ENCODE measurements at regions of chr3 and their contacts with region 1.

Region 1: DNA sequence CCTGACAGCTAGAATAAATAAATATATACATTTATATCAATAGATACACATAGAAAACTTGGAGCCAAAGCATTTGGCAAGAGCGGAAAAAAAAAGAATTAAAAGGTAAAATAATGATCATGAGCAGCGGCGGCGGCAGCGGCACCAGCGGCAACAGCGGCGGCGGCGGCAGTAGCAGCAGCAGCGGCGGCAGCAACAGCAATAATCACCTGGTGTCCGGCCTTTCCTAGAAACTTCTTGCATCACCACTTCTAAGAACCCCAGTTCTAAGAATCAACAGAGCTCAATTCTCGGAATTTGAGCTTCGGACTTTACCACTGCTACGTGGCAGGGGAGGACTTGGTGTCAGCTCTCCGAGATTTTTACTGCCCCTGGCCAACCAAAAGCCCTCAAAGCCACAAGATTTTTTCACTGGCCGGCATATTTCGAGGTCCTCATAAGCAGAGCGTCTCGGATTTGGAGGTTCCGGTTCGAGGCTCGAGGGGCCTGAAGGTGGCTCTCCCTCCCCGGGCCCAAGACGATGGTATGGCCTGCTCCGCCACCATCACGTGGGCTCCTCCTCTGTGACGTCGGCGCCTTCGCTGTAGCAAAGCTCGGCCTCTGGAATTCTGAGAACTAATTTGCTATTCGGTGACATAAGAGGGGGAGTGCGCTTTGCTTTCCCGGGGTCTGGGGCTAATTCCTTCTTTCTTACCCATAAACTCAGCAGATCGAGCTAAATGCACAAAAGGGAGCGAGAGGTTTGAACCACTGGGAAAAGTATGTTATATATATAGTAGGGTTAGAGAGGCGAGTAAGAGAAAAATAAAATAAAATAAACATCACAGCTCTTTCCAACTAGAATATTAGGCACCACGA is at the start of gene BCL6:
- DNase-seq: peak; percentile 94 to 96 (median 94)
- ATAC-seq: peak; percentile 68 to 84 (median 72)
- H3K4me3 ChIP-seq: peak within 1 kb of the TSS; percentile 54 to 89 (median 78)
- H3K27ac ChIP-seq: peak within 1 kb of the TSS; percentile 94 to 100 (median 98)
- H3K4me1 ChIP-seq: peaks cover 0 to 49% (median 14%) of the 10 kb centered on the region in 12 donors
- H3K27me3 ChIP-seq: no peaks in the 10 kb centered on the region
- CTCF ChIP-seq: peak in 2 of 12 donors; percentile 10 to 13
- POLR2A ChIP-seq: peak; percentile 84 to 92
- total RNA-seq, gene BCL6: 29.7 to 109 (median 62.0) TPM

Region 2: GRCh38 chr3:187986514-187986934 is 241.1 kb after region 1 on chr3:
- intact Hi-C with region 1: loop called in 3 of 10 experiments (anchors 2 to 5 kb)
- DNase-seq: no peak
- ATAC-seq: peak in 2 of 4 donors; percentile 10 to 37
- H3K4me3 ChIP-seq: no peak overlapping the region
- H3K27ac ChIP-seq: peak overlapping the region in 4 of 12 donors; percentile 11 to 63 (median 45)
- H3K4me1 ChIP-seq: peaks cover 0 to 27% (median 9%) of the 10 kb centered on the region in 12 donors
- H3K27me3 ChIP-seq: no peaks in the 10 kb centered on the region
- CTCF ChIP-seq: no peak
- POLR2A ChIP-seq: no peak

Region 3: DNA sequence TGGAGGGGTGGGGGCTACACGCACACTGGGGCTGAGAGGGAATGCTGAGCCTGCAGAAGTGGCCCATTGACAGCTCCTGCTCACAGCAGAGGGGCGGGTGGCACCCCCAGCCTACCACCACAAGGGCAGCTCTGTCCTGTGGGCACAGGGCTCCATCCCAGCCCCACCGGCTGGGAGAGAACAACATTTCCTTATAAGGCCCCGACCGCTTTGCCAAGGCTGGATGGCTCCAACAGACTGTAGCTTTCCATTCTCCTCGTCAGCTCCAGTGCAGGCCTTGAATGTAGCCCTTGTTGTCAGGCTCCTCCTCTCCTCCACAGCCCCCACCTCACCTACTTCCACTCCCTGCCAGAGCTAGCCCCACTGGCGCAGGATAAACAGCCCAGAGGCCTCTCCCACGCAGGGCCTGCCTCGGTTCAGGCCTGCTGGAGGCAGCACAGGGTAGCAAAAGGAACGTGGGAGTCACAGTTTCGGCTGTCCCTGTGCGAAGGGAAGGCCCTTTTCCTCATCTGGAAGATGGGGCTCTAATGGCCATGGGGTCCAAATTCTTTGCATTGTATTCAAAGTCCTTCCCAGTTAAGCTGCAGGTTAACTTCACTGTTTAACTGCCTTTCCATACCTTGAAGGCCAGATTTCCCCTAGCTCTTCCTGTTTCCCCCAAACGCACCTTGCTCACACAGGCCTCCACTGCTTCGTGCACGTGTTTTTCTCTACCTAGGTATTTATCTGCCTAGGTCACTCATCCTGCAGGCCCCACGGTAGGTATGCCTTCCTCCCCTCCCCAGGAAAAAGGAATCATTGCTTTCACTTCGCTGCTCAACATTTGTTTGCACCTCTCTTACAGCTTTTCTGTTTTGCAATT is 307.0 kb after region 1 on chr3:
- intact Hi-C with region 1: loop called in 7 of 10 experiments (anchors 1 to 10 kb)
- DNase-seq: peak; percentile 84 to 92 (median 89)
- ATAC-seq: peak; percentile 97 to 98 (median 98)
- H3K4me3 ChIP-seq: peak overlapping the region in 6 of 12 donors; percentile 12 to 37 (median 24)
- H3K27ac ChIP-seq: peak overlapping the region; percentile 49 to 92 (median 79)
- H3K4me1 ChIP-seq: peaks cover 0 to 29% (median 15%) of the 10 kb centered on the region in 12 donors
- H3K27me3 ChIP-seq: peaks cover 0 to 3% (median 0%) of the 10 kb centered on the region in 9 donors
- CTCF ChIP-seq: peak in 11 of 12 donors; percentile 19 to 82 (median 59)
- POLR2A ChIP-seq: peak in 1 of 2 donors; percentile 24

Region 4: DNA sequence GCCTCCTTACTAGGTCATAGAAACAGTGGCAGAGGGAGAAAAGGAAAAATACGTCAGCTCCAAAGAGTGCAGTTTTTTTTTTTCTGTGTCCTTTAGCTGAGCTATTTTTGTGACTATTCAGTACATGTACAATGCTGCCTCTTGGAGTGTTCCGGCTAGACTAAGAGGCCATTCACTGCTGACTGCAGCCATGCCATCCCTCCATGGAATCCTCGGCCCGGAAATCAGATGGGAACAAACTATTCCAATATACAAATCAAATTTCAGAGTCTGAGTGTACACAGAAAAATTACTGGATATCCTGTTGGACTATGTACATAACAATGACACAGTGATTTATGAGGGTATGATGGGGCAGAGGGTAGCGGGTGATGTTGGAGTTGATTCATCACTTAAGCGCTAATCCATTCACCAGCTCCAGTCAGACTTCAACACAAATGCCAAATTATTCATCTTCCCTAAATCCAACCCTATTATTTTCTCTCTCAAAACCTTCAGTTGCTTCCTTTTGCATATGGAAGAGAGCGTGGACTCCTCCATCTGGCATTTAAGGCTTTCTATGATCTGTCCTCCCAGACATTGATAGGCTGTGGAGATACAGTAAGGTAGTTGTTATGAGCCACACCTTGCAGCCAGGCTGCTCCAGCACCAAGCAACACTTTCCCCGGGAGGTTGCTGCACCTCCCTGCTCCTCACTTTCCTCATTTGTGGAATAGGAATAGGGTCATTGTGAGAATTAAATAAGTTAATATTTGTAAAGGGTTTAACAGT is 517.7 kb after region 1 on chr3:
- intact Hi-C with region 1: loop called in 9 of 10 experiments (anchors 2 to 10 kb)
- DNase-seq: peak in 4 of 5 donors; percentile 47 to 60 (median 50)
- ATAC-seq: peak; percentile 79 to 88 (median 86)
- H3K4me3 ChIP-seq: no peak overlapping the region
- H3K27ac ChIP-seq: peak overlapping the region; percentile 74 to 96 (median 89)
- H3K4me1 ChIP-seq: peaks cover 2 to 94% (median 64%) of the 10 kb centered on the region in 12 donors
- H3K27me3 ChIP-seq: no peaks in the 10 kb centered on the region
- CTCF ChIP-seq: peak in 1 of 12 donors; percentile 7
- POLR2A ChIP-seq: no peak

Region 5: DNA sequence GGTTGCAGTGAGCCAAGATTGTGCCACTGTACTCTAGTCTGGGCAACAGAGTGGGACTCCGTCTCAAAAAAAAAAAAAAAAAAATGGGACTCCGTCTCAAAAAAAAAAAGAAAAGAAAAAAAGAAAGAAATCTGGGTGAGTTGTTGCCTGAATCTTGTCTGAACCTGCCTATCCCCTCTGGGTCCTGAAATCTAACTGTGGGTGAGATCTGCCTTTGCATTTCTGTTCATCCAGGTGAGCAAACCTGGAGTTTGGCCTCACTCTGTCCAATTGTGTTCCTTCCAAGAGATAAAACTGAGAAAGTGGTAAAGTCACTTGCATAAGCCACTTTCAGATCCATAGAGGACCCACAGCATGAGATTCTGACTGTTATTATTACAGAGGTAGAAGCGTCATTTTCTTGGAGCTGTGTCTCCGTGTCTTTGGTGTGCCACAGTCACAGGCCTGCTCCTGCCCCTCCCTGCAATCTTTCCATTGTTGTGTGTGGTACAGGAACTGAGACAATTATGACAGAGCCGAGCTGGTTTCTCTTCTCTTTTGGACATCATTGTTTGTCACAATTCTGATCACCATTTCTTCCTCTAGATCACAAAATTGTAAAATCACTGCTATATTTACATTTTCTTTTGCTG is 644.4 kb after region 1 on chr3:
- intact Hi-C with region 1: loop called in 2 of 10 experiments (anchors 10 kb)
- DNase-seq: peak in 4 of 5 donors; percentile 34 to 64 (median 60)
- ATAC-seq: peak; percentile 72 to 93 (median 90)
- H3K4me3 ChIP-seq: no peak overlapping the region
- H3K27ac ChIP-seq: peak overlapping the region in 11 of 12 donors; percentile 0 to 85 (median 48)
- H3K4me1 ChIP-seq: peaks cover 0 to 41% (median 31%) of the 10 kb centered on the region in 12 donors
- H3K27me3 ChIP-seq: no peaks in the 10 kb centered on the region
- CTCF ChIP-seq: no peak
- POLR2A ChIP-seq: no peak

Region 6: DNA sequence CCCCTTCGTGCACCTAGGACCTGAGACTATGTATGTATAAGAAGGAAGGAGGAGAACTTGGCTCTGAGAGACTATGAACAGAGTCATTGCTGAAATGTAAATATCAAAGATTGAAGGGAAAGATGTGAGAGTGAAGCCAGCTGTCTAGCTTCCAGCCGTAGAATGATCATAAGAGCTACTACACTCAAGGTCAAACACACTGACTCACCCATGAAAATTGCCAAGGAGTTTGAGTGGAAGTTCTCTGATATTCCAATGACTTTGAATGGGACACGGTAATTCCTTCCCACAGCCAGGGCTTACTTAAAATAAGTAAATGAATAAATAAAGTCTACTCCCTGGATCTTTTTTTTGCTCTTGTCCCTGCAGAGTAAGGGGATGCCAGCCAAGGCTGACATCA is 1027.5 kb after region 1 on chr3:
- intact Hi-C with region 1: loop called in 1 of 10 experiments (anchors 10 kb)
- DNase-seq: no peak
- ATAC-seq: peak in 3 of 4 donors; percentile 74 to 83 (median 81)
- H3K4me3 ChIP-seq: no peak overlapping the region
- H3K27ac ChIP-seq: peak overlapping the region in 7 of 12 donors; percentile 9 to 34 (median 20)
- H3K4me1 ChIP-seq: peaks cover 0 to 51% (median 17%) of the 10 kb centered on the region in 12 donors
- H3K27me3 ChIP-seq: no peaks in the 10 kb centered on the region
- CTCF ChIP-seq: no peak
- POLR2A ChIP-seq: no peak